Stomach (tissue), 19 donors: ENCODE measurements at regions of chr2 and their contacts with region 1.

Region 1: GRCh38 chr2:25521665-25522387 is 151.6 kb downstream of the DTNB start:
- DNase-seq: peak in 1 of 2 donors; percentile 92
- H3K4me3 ChIP-seq: peak overlapping the region; percentile 27 to 41 (median 36)
- H3K27ac ChIP-seq: peak overlapping the region in 3 of 5 donors; percentile 28 to 54 (median 54)
- H3K4me1 ChIP-seq: peaks cover 0 to 23% (median 12%) of the 10 kb centered on the region in 4 donors
- H3K27me3 ChIP-seq: no peaks in the 10 kb centered on the region
- CTCF ChIP-seq: peak in 5 of 7 experiments; percentile 68 to 93 (median 75)
- EP300 ChIP-seq: no peak
- POLR2A ChIP-seq: no peak

Region 2: GRCh38 chr2:25376750-25377621 is 144.8 kb before region 1 on chr2:
- intact Hi-C with region 1: loop called (anchors 10 kb)
- DNase-seq: peak; percentile 91 to 98
- H3K4me3 ChIP-seq: peak overlapping the region; percentile 14 to 39 (median 21)
- H3K27ac ChIP-seq: peak overlapping the region in 4 of 5 donors; percentile 37 to 71 (median 60)
- H3K4me1 ChIP-seq: peaks cover 18 to 47% (median 27%) of the 10 kb centered on the region in 4 donors
- H3K27me3 ChIP-seq: no peaks in the 10 kb centered on the region
- CTCF ChIP-seq: peak in 5 of 7 experiments; percentile 40 to 98 (median 94)
- EP300 ChIP-seq: no peak
- POLR2A ChIP-seq: no peak